ENCODE measurements at regions of chr2 and their contacts with region 1.

Region 1: DNA sequence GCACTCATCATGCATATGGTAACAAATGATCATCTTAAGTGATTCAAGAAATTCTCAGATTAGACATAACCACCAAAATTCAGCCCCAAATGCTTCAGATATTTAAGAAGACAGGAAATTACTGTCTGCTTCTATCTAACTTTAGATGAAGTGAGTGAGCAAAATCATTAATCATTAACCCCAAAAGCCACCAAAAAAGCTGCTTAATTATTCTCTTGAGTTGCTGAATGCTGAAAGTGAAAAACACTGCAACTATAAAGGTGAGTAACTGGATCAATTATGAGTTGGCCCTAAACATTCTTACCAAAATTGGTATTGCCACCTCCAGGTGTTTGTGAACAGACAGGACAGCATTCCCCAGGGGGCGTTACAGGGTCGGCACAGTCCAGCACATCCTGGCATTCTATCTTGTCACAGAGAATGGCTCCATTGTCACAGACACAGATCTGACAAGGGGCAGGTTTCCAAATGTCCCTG is 69.6 kb downstream of the COL5A2 start:
- DNase-seq: no peak
- ATAC-seq: no peak
- H3K4me3 ChIP-seq: no peak overlapping the region
- H3K27ac ChIP-seq: no peak overlapping the region
- H3K4me1 ChIP-seq: peaks cover 37% of the 10 kb centered on the region
- H3K27me3 ChIP-seq: no peaks in the 10 kb centered on the region
- CTCF ChIP-seq: no peak; the same call in 1 of the 2 replicates

Region 2: GRCh38 chr2:189076572-189076971 is 33.4 kb before region 1 on chr2:
- CTCF ChIA-PET with region 1: no interaction called
- POLR2A ChIA-PET with region 1: no interaction called
- intact Hi-C with region 1: no loop called
- DNase-seq: peak; percentile 12
- ATAC-seq: peak; percentile 37; the same call in 1 of the 2 replicates
- H3K4me3 ChIP-seq: no peak overlapping the region
- H3K27ac ChIP-seq: no peak overlapping the region
- H3K4me1 ChIP-seq: no peaks in the 10 kb centered on the region
- H3K27me3 ChIP-seq: no peaks in the 10 kb centered on the region
- CTCF ChIP-seq: no peak

Region 3: DNA sequence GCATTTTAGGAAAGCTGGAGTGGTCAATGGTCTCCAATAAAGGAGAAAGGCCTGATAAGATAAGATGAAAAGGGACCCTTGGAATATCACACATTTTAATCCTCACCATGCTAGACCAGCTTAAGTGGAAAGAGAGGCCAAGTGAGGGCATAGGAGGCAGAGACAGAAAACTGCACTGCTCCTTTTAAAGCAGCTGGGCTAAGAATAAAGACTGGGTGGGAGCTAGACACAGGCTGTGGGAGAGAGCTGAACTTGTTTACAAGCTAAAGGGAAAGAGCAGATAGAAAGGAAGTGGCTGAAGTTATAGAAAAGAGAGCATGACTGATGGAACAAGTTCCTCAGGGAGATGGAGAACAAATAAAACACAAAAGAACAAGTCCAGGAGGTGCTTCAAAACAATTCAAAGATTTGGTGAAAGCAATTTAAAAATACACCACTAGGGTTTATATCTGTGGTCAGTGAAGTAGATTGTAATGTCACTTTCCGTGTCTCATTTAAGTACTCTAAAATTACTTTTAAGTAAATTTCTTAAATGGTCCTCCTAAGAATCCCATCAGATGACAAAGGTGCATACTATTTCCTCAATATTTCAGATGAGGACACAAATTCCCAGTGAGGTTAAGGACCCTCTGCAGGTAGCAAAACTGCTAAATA is 62.1 kb after region 1 on chr2:
- CTCF ChIA-PET with region 1: no interaction called
- POLR2A ChIA-PET with region 1: no interaction called
- intact Hi-C with region 1: loop called (anchors 5 kb)
- DNase-seq: peak; percentile 17
- ATAC-seq: no peak
- H3K4me3 ChIP-seq: no peak overlapping the region
- H3K27ac ChIP-seq: no peak overlapping the region
- H3K4me1 ChIP-seq: peaks cover 6% of the 10 kb centered on the region; the same call in 1 of the 2 replicates
- H3K27me3 ChIP-seq: no peaks in the 10 kb centered on the region
- CTCF ChIP-seq: 0 out of 2 replicates have a peak, but pooled peaks have one; percentile 14

Measured in PC-3 (cell line).